Mucosa of descending colon (tissue), 3 donors: ENCODE measurements at regions of chr7 and their contacts with region 1.

Region 1: DNA sequence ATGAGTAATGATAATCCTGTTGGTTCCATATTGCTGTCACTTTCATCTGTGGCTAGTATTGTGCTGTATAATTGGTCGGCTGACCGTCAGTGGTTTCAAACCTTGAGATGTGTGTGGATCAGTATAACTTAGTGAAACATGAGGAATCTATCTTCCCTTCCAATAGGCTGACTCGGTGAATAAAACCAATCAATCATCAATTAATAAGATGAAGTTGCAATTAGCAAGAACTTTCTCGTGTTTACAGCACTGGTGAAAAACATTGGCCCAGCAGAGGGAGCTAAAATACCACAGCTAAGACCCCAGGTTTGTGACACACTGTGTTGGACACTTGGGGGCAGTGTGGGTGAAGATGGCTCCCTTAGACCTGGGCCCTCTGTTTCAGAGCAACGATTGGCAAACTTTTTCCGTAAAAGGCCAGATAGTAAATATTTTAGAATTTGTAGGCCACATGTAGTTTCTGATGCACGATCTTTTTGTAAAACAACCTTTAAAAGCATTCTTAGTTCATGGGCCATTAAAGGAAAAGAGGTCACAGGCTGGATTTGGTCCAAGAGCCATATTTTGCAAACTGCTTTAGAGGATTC is 47.8 kb downstream of the STRA8 start:
- DNase-seq: peak in 2 of 3 donors; percentile 62 to 95
- ATAC-seq: peak; percentile 98
- H3K4me3 ChIP-seq: no peak overlapping the region
- H3K4me1 ChIP-seq: no peaks in the 10 kb centered on the region
- CTCF ChIP-seq: peak; percentile 77

Region 2: DNA sequence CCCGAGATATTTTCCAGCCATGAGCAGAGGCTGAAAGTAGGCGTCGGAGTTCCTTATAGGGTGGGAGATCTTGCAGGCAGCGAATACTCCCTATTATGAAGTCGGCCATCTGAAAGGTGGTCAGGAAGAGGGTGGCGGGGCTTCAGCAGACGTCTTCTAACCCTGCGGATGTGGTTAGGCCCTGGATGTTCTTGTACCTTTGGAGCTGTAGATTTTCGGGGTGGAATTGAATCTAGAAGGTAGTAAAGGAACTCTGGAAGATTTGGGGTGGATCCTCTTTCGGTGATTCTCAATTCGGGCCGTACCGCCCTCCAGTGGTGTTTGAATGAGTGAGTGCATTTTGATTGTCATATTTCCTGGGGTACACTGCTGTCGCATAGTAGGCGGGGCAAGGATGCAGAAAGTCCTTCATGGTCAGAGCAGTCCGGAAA is 276.9 kb after region 1 on chr7:
- intact Hi-C with region 1: loop called in 1 of 2 experiments (anchors 5 kb)
- DNase-seq: peak in 2 of 3 donors; percentile 59 to 73
- ATAC-seq: peak; percentile 79
- H3K4me3 ChIP-seq: peak overlapping the region; percentile 56
- H3K4me1 ChIP-seq: peaks cover 5% of the 10 kb centered on the region
- CTCF ChIP-seq: no peak

Region 3: GRCh38 chr7:135645296-135645904 is 363.9 kb after region 1 on chr7:
- intact Hi-C with region 1: loop called in 1 of 2 experiments (anchors 10 kb)
- DNase-seq: peak in 1 of 3 donors; percentile 48
- ATAC-seq: peak; percentile 72
- H3K4me3 ChIP-seq: no peak overlapping the region
- H3K4me1 ChIP-seq: no peaks in the 10 kb centered on the region
- CTCF ChIP-seq: peak; percentile 35

Region 4: GRCh38 chr7:135808206-135808605 is 526.8 kb after region 1 on chr7:
- intact Hi-C with region 1: no loop called
- DNase-seq: no peak
- ATAC-seq: no peak
- H3K4me3 ChIP-seq: no peak overlapping the region
- H3K4me1 ChIP-seq: no peaks in the 10 kb centered on the region
- CTCF ChIP-seq: no peak